ENCODE measurements at regions of chr3 and their contacts with region 1.

Region 1: DNA sequence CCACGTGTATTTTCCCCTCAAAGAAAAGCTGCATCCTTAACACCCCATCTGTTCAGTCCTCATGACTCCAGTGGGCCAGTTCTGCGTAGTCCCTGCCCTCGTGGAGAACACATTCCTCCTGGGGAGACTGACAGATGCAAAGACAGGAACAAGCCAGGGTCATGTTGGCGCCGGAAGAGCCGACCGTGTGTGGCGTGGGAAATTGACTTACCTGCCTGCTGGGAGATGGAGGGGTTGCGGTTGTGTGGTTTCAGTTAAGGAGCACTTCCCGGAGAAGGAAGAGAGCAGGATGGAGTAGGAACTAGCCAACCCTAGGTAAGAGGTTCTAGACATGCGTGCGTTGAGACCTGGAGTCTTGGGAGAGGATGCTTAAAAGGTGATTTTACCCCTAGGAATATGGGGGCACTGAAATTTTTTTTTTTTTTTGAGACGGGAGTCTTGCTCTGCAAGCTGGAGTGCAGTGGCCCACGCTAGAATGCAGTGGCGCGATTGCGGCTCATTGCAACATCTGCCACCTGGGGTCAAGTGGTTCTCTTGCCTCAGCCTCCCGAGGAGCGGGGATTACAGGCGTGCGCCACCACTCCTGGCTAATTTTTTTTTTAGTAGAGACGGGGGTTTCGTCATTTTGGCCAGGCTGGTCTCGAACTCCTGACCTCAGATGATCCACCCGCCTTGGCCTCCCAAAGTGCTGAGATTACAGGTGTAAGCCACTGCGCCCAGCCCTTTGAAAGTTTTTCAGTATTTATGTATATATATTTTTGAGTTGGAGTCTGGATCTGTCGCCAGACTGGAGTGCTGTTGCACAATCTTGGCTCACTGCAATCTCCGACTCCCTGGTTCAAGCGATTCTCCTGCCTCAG is 1.4 kb downstream of the VHL start:
- DNase-seq: peak in 2 of 9 donors; percentile 11 to 12
- ATAC-seq: no peak
- H3K4me3 ChIP-seq: peak overlapping the region; percentile 87
- H3K4me3 Mint-ChIP-seq: peak overlapping the region; percentile 85 to 98 (median 96)
- H3K27ac ChIP-seq: peak overlapping the region; percentile 95
- H3K27ac Mint-ChIP-seq: peak overlapping the region; percentile 38 to 98 (median 94)
- H3K4me1 ChIP-seq: peaks cover 10 to 12% of the 10 kb centered on the region in 2 donors
- H3K4me1 Mint-ChIP-seq: peaks cover 14 to 48% (median 37%) of the 10 kb centered on the region in 7 donors
- H3K27me3 ChIP-seq: no peaks in the 10 kb centered on the region
- H3K27me3 Mint-ChIP-seq: no peaks in the 10 kb centered on the region

Region 2: GRCh38 chr3:10164546-10165393 is 21.8 kb after region 1 on chr3 and contains the start of gene IRAK2:
- CTCF ChIA-PET with region 1: interaction called, 8 read pairs
- POLR2A ChIA-PET with region 1: interaction called, 4 read pairs
- intact Hi-C with region 1: loop called (anchors 1 to 2 kb)
- DNase-seq: peak; percentile 25 to 75 (median 57)
- ATAC-seq: peak; percentile 92
- H3K4me3 ChIP-seq: peak within 1 kb of the TSS; percentile 85
- H3K4me3 Mint-ChIP-seq: peak within 1 kb of the TSS; percentile 79 to 94 (median 86)
- H3K27ac ChIP-seq: peak within 1 kb of the TSS; percentile 68
- H3K27ac Mint-ChIP-seq: peak within 1 kb of the TSS; percentile 2 to 89 (median 68)
- H3K4me1 ChIP-seq: peaks cover 5 to 9% of the 10 kb centered on the region in 2 donors
- H3K4me1 Mint-ChIP-seq: peaks cover 12 to 37% (median 25%) of the 10 kb centered on the region in 7 donors
- H3K27me3 ChIP-seq: no peaks in the 10 kb centered on the region
- H3K27me3 Mint-ChIP-seq: no peaks in the 10 kb centered on the region
- total RNA-seq, gene IRAK2: 1.5 to 4.8 (median 2.3) TPM

Region 3: GRCh38 chr3:10198761-10199649 is 56.1 kb after region 1 on chr3:
- CTCF ChIA-PET with region 1: interaction called, 4 read pairs
- POLR2A ChIA-PET with region 1: interaction called, 7 read pairs
- intact Hi-C with region 1: loop called (anchors 1 to 2 kb)
- DNase-seq: peak; percentile 33 to 84 (median 67)
- ATAC-seq: peak; percentile 86
- H3K4me3 ChIP-seq: no peak overlapping the region
- H3K4me3 Mint-ChIP-seq: peak overlapping the region; percentile 66 to 80 (median 73)
- H3K27ac ChIP-seq: peak overlapping the region; percentile 89
- H3K27ac Mint-ChIP-seq: peak overlapping the region; percentile 84 to 99 (median 93)
- H3K4me1 ChIP-seq: peaks cover 46 to 57% of the 10 kb centered on the region in 2 donors
- H3K4me1 Mint-ChIP-seq: peaks cover 45 to 86% (median 72%) of the 10 kb centered on the region in 7 donors
- H3K27me3 ChIP-seq: no peaks in the 10 kb centered on the region
- H3K27me3 Mint-ChIP-seq: no peaks in the 10 kb centered on the region

Region 4: GRCh38 chr3:10248184-10249080 is 105.5 kb after region 1 on chr3 and contains the start of gene TATDN2:
- CTCF ChIA-PET with region 1: no interaction called
- POLR2A ChIA-PET with region 1: interaction called, 6 read pairs
- intact Hi-C with region 1: loop called (anchors 1 kb)
- DNase-seq: peak; percentile 80 to 91 (median 88)
- ATAC-seq: peak; percentile 98
- H3K4me3 ChIP-seq: peak within 1 kb of the TSS; percentile 99
- H3K4me3 Mint-ChIP-seq: peak within 1 kb of the TSS; percentile 96 to 100 (median 99)
- H3K27ac ChIP-seq: peak within 1 kb of the TSS; percentile 80
- H3K27ac Mint-ChIP-seq: peak within 1 kb of the TSS; percentile 91 to 97 (median 95)
- H3K4me1 ChIP-seq: peaks cover 28 to 30% of the 10 kb centered on the region in 2 donors
- H3K4me1 Mint-ChIP-seq: peaks cover 44 to 63% (median 52%) of the 10 kb centered on the region in 7 donors
- H3K27me3 ChIP-seq: no peaks in the 10 kb centered on the region
- H3K27me3 Mint-ChIP-seq: no peaks in the 10 kb centered on the region
- total RNA-seq, gene TATDN2: 52.9 to 88.8 (median 71.6) TPM

Measured in naive thymus-derived CD4-positive, alpha-beta T cell (primary cell).